ENCODE measurements at regions of chrX and their contacts with region 1.

Region 1: GRCh38 chrX:12984629-12985319 is 9.9 kb downstream of the TMSB4X start:
- DNase-seq: peak; percentile 65
- ATAC-seq: peak; percentile 84
- H3K4me3 Mint-ChIP-seq: peak overlapping the region; percentile 28
- H3K27ac Mint-ChIP-seq: peak overlapping the region; percentile 89
- H3K4me1 Mint-ChIP-seq: peaks cover 70% of the 10 kb centered on the region
- H3K27me3 Mint-ChIP-seq: no peaks in the 10 kb centered on the region

Region 2: DNA sequence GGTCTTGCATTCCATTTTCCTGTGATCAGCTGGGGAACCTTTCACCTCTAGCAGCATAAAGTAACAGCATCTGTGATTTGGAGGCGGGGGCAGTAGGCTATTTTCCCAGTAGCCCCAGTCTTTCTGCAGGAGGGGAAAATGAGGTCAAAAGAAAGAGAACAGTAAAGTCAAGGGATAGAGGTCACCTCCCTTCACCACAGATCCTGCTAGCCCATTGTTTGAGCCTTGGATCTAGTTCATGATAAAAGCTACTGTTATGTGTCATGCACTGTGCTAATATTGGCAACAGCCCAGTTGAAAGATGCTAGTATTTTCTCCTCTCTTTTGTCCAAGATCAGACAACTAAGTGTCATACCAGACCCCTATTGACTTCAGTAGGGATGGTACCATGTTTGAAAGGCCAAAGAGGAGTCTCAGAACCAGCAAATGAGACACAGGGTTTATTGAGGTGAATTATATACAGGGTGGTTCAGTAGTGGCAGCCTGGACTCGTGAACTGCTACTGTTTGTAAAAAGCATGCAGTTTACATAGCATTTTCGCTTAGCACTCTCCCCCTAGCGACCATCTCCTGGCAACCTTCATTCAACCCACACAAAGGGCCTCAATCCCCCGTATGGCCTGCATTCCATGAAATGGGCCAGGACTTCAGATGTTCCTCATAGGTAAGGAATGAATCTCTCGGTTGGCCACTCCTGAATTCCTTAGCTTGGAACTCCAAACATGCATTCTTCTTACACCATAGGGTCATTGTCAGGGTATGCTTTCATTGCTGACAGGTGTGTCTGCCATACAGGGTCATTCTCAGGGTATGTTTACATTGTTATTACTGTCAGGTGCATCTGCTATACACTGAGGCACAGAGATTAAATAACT is 1016.6 kb before region 1 on chrX:
- CTCF ChIA-PET with region 1: no interaction called
- POLR2A ChIA-PET with region 1: no interaction called
- intact Hi-C with region 1: no loop called
- DNase-seq: no peak
- ATAC-seq: no peak
- H3K4me3 Mint-ChIP-seq: no peak overlapping the region
- H3K27ac Mint-ChIP-seq: no peak overlapping the region
- H3K4me1 Mint-ChIP-seq: no peaks in the 10 kb centered on the region
- H3K27me3 Mint-ChIP-seq: no peaks in the 10 kb centered on the region

Region 3: DNA sequence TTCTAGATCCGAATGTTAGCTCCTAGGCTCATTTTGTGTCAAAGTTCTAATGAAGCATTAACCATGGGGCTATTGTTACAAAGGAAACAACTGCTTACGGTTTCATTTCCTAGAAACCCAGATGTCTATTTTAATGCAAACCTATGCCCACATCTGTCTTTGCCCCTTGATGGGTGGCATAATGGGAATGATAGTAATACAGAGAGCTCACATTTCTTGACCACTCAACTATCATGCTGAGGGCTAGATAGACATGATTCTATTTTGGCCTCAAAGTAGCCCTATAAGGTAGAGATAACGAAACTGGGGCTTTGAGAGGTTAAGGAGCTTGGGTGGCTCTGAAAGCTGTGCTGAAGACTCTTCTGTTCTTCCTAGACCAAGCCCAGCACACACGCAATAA is 116.0 kb before region 1 on chrX:
- CTCF ChIA-PET with region 1: no interaction called
- POLR2A ChIA-PET with region 1: no interaction called
- intact Hi-C with region 1: no loop called
- DNase-seq: no peak
- ATAC-seq: no peak
- H3K4me3 Mint-ChIP-seq: no peak overlapping the region
- H3K27ac Mint-ChIP-seq: no peak overlapping the region
- H3K4me1 Mint-ChIP-seq: peaks cover 5% of the 10 kb centered on the region
- H3K27me3 Mint-ChIP-seq: no peaks in the 10 kb centered on the region

Region 4: DNA sequence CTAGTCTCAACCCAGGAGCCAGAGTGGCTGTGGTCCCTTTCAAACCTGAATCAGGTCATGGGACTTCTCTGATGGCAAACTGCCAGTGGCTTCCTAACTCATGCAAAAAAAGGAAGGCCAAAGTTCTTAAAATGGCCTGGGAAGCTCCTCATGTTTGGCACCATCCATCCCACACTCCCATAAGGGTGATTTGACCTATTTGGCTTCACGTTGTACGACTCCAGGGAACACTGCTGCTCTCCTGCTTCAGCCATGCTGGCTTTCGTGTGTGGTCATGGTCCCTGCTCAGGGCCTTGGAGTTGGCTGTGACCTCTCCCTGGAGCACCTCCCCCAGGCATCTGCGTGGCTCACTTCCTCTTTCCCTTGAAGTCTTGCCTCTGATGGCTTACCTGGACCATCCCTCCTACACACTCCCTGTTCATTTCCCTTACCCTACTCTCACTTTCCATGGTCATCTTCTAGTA is 22.7 kb before region 1 on chrX:
- CTCF ChIA-PET with region 1: no interaction called
- POLR2A ChIA-PET with region 1: no interaction called
- intact Hi-C with region 1: no loop called
- DNase-seq: no peak
- ATAC-seq: no peak
- H3K4me3 Mint-ChIP-seq: no peak overlapping the region
- H3K27ac Mint-ChIP-seq: peak overlapping the region; percentile 81
- H3K4me1 Mint-ChIP-seq: peaks cover 62% of the 10 kb centered on the region
- H3K27me3 Mint-ChIP-seq: no peaks in the 10 kb centered on the region

Region 5: DNA sequence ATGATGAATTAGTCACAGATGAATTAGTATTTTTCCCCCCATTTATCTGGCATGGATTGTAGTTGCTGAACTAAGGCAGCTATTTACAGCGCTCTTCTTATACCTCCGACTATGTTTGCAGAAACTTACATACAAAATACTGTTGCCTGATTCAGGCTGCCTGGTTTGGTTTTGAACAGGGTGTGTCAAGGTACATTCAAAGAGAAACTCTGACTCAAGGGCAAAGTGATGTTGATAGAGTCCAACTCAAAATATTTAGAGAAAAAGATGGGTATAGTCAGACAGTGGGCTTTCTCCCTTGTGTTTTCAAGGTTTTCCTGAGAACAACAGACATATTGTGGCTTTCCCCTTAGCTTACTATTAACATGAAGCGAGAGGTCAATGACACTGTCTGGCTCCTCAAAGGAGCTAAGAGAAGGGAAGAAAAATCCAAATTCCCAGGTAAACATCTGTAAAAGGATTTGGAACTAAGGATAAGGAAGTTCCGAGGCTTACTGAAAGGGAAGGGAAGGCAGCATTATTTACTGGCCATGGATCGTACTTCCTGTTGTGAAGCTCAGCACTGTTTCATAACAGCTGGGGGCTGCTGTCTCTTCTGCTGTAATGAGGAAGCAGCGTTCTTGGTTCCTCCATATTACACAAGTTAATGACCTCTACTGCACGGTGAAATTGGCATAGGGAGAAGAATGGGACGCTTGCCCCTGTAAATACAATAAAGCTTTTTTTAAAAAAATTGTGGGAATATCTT is 28.8 kb after region 1 on chrX:
- CTCF ChIA-PET with region 1: no interaction called
- POLR2A ChIA-PET with region 1: no interaction called
- intact Hi-C with region 1: loop called in 1 of 2 experiments (anchors 1 kb)
- DNase-seq: peak; percentile 38
- ATAC-seq: peak; percentile 91
- H3K4me3 Mint-ChIP-seq: peak overlapping the region; percentile 45
- H3K27ac Mint-ChIP-seq: peak overlapping the region; percentile 80
- H3K4me1 Mint-ChIP-seq: peaks cover 63% of the 10 kb centered on the region
- H3K27me3 Mint-ChIP-seq: no peaks in the 10 kb centered on the region

Region 6: GRCh38 chrX:13051529-13052172 is 66.9 kb after region 1 on chrX:
- CTCF ChIA-PET with region 1: no interaction called
- POLR2A ChIA-PET with region 1: interaction called, 3 read pairs
- intact Hi-C with region 1: loop called (anchors 1 kb)
- DNase-seq: no peak
- ATAC-seq: peak; percentile 81
- H3K4me3 Mint-ChIP-seq: no peak overlapping the region
- H3K27ac Mint-ChIP-seq: peak overlapping the region; percentile 90
- H3K4me1 Mint-ChIP-seq: peaks cover 83% of the 10 kb centered on the region
- H3K27me3 Mint-ChIP-seq: no peaks in the 10 kb centered on the region